Right cardiac atrium (tissue), 5 donors: ENCODE measurements at regions of chr10 and their contacts with region 1.

Region 1: GRCh38 chr10:43292755-43293676 is 26.2 kb upstream of the RASGEF1A start:
- DNase-seq: peak; percentile 37 to 67 (median 66)
- ATAC-seq: peak; percentile 72 to 76
- H3K4me3 ChIP-seq: no peak overlapping the region
- H3K27ac ChIP-seq: no peak overlapping the region
- H3K4me1 ChIP-seq: no peaks in the 10 kb centered on the region
- H3K27me3 ChIP-seq: no peaks in the 10 kb centered on the region

Region 2: GRCh38 chr10:43461950-43462349 is 168.9 kb after region 1 on chr10:
- intact Hi-C with region 1: loop called (anchors 2 to 10 kb)
- DNase-seq: no peak
- ATAC-seq: peak; percentile 64 to 70
- H3K4me3 ChIP-seq: no peak overlapping the region
- H3K27ac ChIP-seq: no peak overlapping the region
- H3K4me1 ChIP-seq: no peaks in the 10 kb centered on the region
- H3K27me3 ChIP-seq: no peaks in the 10 kb centered on the region